Upper lobe of right lung (tissue), 1 donor: ENCODE measurements at regions of chr15 and their contacts with region 1.

Region 1: GRCh38 chr15:90071208-90071807 is 31.0 kb downstream of the IDH2 start:
- DNase-seq: peak; percentile 83
- ATAC-seq: peak; percentile 86
- H3K4me3 ChIP-seq: no peak overlapping the region
- H3K27ac ChIP-seq: peak overlapping the region; percentile 51
- H3K4me1 ChIP-seq: peaks cover 16% of the 10 kb centered on the region
- H3K27me3 ChIP-seq: no peaks in the 10 kb centered on the region
- CTCF ChIP-seq: peak; percentile 82

Region 2: DNA sequence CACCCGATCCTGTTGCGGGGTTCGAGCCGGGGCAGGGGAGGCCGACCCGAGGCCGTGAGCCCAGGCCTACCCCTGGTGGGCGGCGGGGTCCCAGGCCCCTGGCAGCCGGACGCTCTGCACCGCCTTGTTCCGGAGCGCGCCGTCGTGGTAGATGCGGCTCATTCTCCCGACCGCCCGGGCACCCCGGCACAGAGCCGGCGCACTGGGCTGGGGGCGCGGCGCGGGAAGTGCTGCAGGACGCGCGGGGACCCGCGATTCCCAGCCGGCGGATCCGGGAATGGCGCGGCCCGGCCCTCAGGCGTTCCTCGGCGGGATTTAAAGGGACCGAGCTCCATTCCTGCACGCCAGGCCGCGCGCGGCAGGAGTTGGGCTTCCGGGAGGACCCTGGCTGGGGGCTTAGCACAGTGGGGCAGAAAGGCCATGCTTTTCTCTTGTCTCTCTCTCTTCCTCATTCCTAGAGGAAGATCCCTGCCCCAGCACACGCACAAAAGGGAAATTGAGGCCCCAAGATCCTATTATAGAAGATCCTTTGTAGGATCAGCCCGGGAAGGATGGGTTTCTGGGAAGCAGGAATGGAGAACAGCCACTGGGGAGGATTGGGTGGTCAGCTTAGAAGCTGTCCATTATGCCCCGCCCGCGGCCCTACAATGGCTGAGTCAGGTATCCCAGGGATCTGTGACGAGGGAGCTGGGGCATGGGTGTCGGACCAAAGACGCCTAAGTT is 158.5 kb before region 1 on chr15 and contains the start of gene ARPIN:
- intact Hi-C with region 1: loop called (anchors 5 kb)
- DNase-seq: peak; percentile 83
- ATAC-seq: peak; percentile 79
- H3K4me3 ChIP-seq: peak within 1 kb of the TSS; percentile 83
- H3K27ac ChIP-seq: peak within 1 kb of the TSS; percentile 86
- H3K4me1 ChIP-seq: peaks cover 20% of the 10 kb centered on the region
- H3K27me3 ChIP-seq: no peaks in the 10 kb centered on the region
- CTCF ChIP-seq: no peak
- total RNA-seq, gene ARPIN: 30.5 TPM

Region 3: DNA sequence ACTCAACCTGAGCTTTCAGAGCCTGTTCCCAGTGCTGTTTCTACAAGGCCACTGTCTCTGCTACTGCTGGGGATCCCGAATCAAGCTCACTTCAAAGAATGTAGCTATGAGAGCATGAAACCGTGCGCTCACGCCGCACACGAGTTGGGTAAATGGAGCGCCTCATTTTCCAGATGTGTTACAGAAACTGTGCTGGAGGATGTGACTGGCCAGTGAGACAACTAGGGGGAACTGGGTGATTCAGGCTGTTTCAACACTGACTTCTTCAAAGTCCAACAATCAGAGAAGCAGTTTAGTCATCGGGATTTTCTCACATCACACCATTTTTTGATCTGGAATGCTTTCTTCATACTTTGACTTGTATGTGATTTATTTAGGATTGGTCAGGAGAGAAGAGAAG is 66.6 kb before region 1 on chr15:
- intact Hi-C with region 1: no loop called
- DNase-seq: no peak
- ATAC-seq: peak; percentile 44
- H3K4me3 ChIP-seq: peak overlapping the region; percentile 76
- H3K27ac ChIP-seq: peak overlapping the region; percentile 67
- H3K4me1 ChIP-seq: peaks cover 39% of the 10 kb centered on the region
- H3K27me3 ChIP-seq: no peaks in the 10 kb centered on the region
- CTCF ChIP-seq: no peak